Activated CD4-positive, alpha-beta T cell treated with anti-CD3 and anti-CD28 coated beads for 36 hours (primary cell): ENCODE measurements at regions of chr1 and their contacts with region 1.

Region 1: GRCh38 chr1:24415334-24415909 is at the start of gene NIPAL3:
- DNase-seq: peak; percentile 99
- ATAC-seq: peak; percentile 94
- H3K4me3 Mint-ChIP-seq: peak within 1 kb of the TSS; percentile 98
- H3K27ac Mint-ChIP-seq: peak within 1 kb of the TSS; percentile 97
- H3K4me1 Mint-ChIP-seq: peaks cover 57% of the 10 kb centered on the region
- H3K27me3 Mint-ChIP-seq: no peaks in the 10 kb centered on the region
- total RNA-seq, gene NIPAL3: 38.1 to 41.4 TPM

Region 2: GRCh38 chr1:23959041-23959460 is 456.4 kb before region 1 on chr1:
- CTCF ChIA-PET with region 1: interaction called, 3 read pairs
- POLR2A ChIA-PET with region 1: no interaction called
- intact Hi-C with region 1: loop called in 1 of 2 experiments (anchors 1 kb)
- DNase-seq: peak; percentile 97
- ATAC-seq: peak; percentile 82
- H3K4me3 Mint-ChIP-seq: peak overlapping the region; percentile 100
- H3K27ac Mint-ChIP-seq: peak overlapping the region; percentile 100
- H3K4me1 Mint-ChIP-seq: peaks cover 53% of the 10 kb centered on the region
- H3K27me3 Mint-ChIP-seq: no peaks in the 10 kb centered on the region

Region 3: DNA sequence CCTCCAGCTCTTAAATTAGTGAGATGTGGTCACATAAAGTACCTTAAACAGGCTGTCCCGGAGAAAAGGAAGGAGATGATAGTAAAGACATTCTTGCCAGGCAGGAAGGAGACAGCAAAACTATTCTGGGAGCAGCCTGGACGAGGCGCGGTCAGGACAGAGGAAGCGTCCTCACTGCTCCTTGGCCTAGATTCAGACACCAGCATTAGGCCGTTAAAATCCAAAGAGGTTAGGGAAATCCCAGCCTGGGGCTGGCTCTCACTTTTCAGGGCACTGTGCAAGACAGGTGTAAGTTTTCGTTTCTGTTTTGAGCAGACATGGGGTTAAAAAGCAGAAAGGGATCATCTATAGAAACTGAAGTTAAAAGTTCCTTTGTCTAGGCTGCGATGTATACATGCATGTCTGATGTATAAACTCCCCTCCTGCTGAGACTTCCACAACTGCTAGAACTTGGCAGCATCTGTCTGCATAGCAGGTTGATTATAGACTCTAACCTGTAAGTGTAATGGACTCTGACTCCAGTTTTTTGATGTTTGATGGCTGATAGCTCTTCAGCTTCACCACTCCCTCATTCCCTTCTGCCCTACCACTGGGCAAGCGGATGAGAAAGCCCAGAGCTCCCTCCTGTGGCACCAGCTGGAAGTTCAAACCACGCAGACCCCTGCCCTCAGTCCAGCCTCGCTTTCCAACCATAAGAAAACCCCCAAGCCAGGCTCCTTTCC is 23.4 kb before region 1 on chr1:
- CTCF ChIA-PET with region 1: interaction called, 50 read pairs
- POLR2A ChIA-PET with region 1: interaction called, 3 read pairs
- intact Hi-C with region 1: loop called in 1 of 2 experiments (anchors 1 kb)
- DNase-seq: peak; percentile 86
- ATAC-seq: peak; percentile 83
- H3K4me3 Mint-ChIP-seq: peak overlapping the region; percentile 52
- H3K27ac Mint-ChIP-seq: peak overlapping the region; percentile 85
- H3K4me1 Mint-ChIP-seq: peaks cover 39% of the 10 kb centered on the region
- H3K27me3 Mint-ChIP-seq: no peaks in the 10 kb centered on the region

Region 4: GRCh38 chr1:24491577-24492360 is 76.3 kb after region 1 on chr1:
- CTCF ChIA-PET with region 1: interaction called, 8 read pairs
- POLR2A ChIA-PET with region 1: interaction called, 5 read pairs
- intact Hi-C with region 1: loop called in 1 of 2 experiments (anchors 1 kb)
- DNase-seq: no peak
- ATAC-seq: no peak
- H3K4me3 Mint-ChIP-seq: no peak overlapping the region
- H3K27ac Mint-ChIP-seq: no peak overlapping the region
- H3K4me1 Mint-ChIP-seq: peaks cover 45% of the 10 kb centered on the region
- H3K27me3 Mint-ChIP-seq: no peaks in the 10 kb centered on the region

Region 5: GRCh38 chr1:24536391-24536840 is 121.0 kb after region 1 on chr1:
- CTCF ChIA-PET with region 1: interaction called, 14 read pairs
- POLR2A ChIA-PET with region 1: interaction called, 5 read pairs
- intact Hi-C with region 1: loop called (anchors 1 kb)
- DNase-seq: peak; percentile 81
- ATAC-seq: peak; percentile 52
- H3K4me3 Mint-ChIP-seq: peak overlapping the region; percentile 76
- H3K27ac Mint-ChIP-seq: peak overlapping the region; percentile 99
- H3K4me1 Mint-ChIP-seq: peaks cover 85% of the 10 kb centered on the region
- H3K27me3 Mint-ChIP-seq: no peaks in the 10 kb centered on the region

Region 6: GRCh38 chr1:25037174-25038074 is 622.0 kb after region 1 on chr1:
- CTCF ChIA-PET with region 1: no interaction called
- POLR2A ChIA-PET with region 1: no interaction called
- intact Hi-C with region 1: loop called in 1 of 2 experiments (anchors 10 kb)
- DNase-seq: peak; percentile 86
- ATAC-seq: peak; percentile 55
- H3K4me3 Mint-ChIP-seq: no peak overlapping the region
- H3K27ac Mint-ChIP-seq: peak overlapping the region; percentile 27
- H3K4me1 Mint-ChIP-seq: peaks cover 35% of the 10 kb centered on the region
- H3K27me3 Mint-ChIP-seq: no peaks in the 10 kb centered on the region

Region 7: GRCh38 chr1:25174730-25175612 is 759.5 kb after region 1 on chr1:
- CTCF ChIA-PET with region 1: no interaction called
- POLR2A ChIA-PET with region 1: no interaction called
- intact Hi-C with region 1: no loop called
- DNase-seq: no peak
- ATAC-seq: no peak
- H3K4me3 Mint-ChIP-seq: no peak overlapping the region
- H3K27ac Mint-ChIP-seq: no peak overlapping the region
- H3K4me1 Mint-ChIP-seq: no peaks in the 10 kb centered on the region
- H3K27me3 Mint-ChIP-seq: no peaks in the 10 kb centered on the region